Panc1 (cell line): ENCODE measurements at regions of chr5 and their contacts with region 1.

Region 1: DNA sequence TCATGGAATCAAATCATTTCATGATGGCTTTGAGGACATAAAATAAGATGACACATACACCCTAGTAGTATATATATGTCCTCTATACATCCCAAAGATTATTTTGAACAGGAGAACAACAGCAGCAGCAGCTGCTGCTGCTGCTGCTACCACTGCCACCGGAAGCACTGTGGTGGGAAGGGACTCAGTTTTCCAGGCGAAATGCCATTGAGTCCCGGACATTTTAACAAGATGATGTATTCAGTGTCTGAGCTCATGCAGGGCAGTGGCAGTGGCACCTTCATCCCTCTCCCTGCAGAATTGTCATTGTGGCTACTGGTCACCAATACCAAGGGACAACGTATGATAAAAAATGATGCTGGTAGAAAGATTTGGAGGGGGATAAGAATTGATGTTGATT is 151.3 kb downstream of the CHSY3 start:
- DNase-seq: no peak
- ATAC-seq: no peak
- H3K4me3 ChIP-seq: no peak overlapping the region
- H3K27ac ChIP-seq: no peak overlapping the region
- H3K4me1 ChIP-seq: no peaks in the 10 kb centered on the region
- H3K27me3 ChIP-seq: no peaks in the 10 kb centered on the region
- CTCF ChIP-seq: no peak

Region 2: DNA sequence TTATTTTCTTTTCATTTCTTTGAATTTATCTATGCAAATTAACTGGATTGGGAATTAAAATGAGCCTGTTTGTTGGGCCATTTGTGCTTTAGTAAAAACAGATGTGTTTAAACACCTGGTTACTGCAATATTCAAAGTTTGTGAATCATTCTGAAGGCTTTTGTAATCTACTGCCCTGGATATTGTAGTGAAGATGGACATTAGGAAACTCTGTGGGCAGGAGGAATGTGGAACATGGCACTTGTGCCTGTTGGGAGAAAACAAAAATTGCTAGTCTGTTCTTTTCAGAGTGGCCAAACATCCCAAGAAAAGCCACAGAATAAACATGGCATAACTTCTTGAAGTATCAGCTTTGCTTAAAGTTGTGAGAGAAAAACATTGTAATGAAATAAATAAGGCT is 110.5 kb before region 1 on chr5:
- CTCF ChIA-PET with region 1: no interaction called
- POLR2A ChIA-PET with region 1: no interaction called
- in situ Hi-C with region 1: no loop called
- intact Hi-C with region 1: no loop called
- DNase-seq: no peak
- ATAC-seq: no peak
- H3K4me3 ChIP-seq: no peak overlapping the region
- H3K27ac ChIP-seq: no peak overlapping the region
- H3K4me1 ChIP-seq: no peaks in the 10 kb centered on the region
- H3K27me3 ChIP-seq: no peaks in the 10 kb centered on the region
- CTCF ChIP-seq: no peak

Region 3: GRCh38 chr5:130045334-130045733 is 10.2 kb before region 1 on chr5:
- CTCF ChIA-PET with region 1: no interaction called
- POLR2A ChIA-PET with region 1: interaction called, 13 read pairs
- in situ Hi-C with region 1: no loop called
- intact Hi-C with region 1: no loop called
- DNase-seq: no peak
- ATAC-seq: no peak
- H3K4me3 ChIP-seq: no peak overlapping the region
- H3K27ac ChIP-seq: no peak overlapping the region
- H3K4me1 ChIP-seq: no peaks in the 10 kb centered on the region
- H3K27me3 ChIP-seq: no peaks in the 10 kb centered on the region
- CTCF ChIP-seq: no peak